ENCODE measurements at regions of chr5 and their contacts with region 1.

Region 1: GRCh38 chr5:55159763-55160492 is at the start of gene GPX8:
- DNase-seq: peak; percentile 17 to 52 (median 36)
- ATAC-seq: peak; percentile 91
- H3K4me3 ChIP-seq: no peak within 1 kb of the TSS
- H3K27ac ChIP-seq: no peak within 1 kb of the TSS
- H3K4me1 ChIP-seq: no peaks in the 10 kb centered on the region
- H3K27me3 ChIP-seq: peaks cover 4 to 10% of the 10 kb centered on the region in 2 experiments; a peak in 3 of 5 replicates
- CTCF ChIP-seq: peak; percentile 49 to 77 (median 61); a peak in 5 of 6 replicates
- EP300 ChIP-seq: no peak
- POLR2A ChIP-seq: no peak
- RAD21 ChIP-seq: peak; percentile 74 to 76
- polyA plus RNA-seq, gene GPX8: 0.90 to 0.92 TPM

Region 2: GRCh38 chr5:54905943-54906537 is 253.9 kb before region 1 on chr5:
- CTCF ChIA-PET with region 1: interaction called, 17 read pairs
- POLR2A ChIA-PET with region 1: no interaction called
- in situ Hi-C with region 1: loop called (anchors 10 kb)
- intact Hi-C with region 1: no loop called
- DNase-seq: peak; percentile 37 to 61 (median 46)
- ATAC-seq: peak; percentile 69
- H3K4me3 ChIP-seq: no peak overlapping the region
- H3K27ac ChIP-seq: no peak overlapping the region
- H3K4me1 ChIP-seq: no peaks in the 10 kb centered on the region
- H3K27me3 ChIP-seq: peaks cover 0 to 7% of the 10 kb centered on the region in 2 experiments; a peak in 2 of 5 replicates
- CTCF ChIP-seq: peak; percentile 60 to 82 (median 68); a peak in 5 of 6 replicates
- EP300 ChIP-seq: no peak
- POLR2A ChIP-seq: no peak
- RAD21 ChIP-seq: peak; percentile 79 to 80

Region 3: DNA sequence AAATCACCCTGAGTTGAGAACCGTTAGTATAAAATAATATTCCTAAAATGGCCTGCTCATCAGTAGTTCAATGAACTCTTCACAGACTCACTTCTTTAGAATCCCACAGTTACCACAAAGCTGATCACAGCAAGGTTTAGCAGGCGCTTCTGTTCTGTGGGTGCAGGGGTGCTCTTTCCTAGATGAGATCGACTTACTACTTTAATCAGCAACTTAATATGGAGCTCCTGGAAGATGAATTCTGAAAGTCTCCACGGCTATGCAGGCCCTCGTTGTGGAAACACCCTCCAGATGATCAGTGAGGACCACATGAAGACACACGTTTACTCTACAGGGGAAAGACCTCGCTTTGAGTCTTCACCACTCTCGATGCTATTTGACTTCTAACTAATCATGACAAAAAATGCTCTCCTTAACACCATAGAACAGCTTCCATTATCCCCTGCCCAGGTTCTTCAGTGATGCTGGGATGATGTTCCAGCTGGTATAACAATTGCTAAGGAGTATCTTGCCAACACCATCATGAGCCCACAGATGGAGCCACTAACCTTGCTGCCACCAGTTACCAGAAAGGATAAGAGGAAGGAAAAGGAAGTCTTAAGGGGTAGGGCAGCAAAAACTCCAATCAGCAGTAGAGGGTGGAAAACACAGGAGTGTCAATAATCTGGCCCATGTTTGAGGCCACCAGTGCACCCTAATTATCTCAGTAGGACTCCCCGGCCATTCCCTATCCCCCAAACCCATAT is 17.8 kb before region 1 on chr5:
- CTCF ChIA-PET with region 1: no interaction called
- POLR2A ChIA-PET with region 1: no interaction called
- in situ Hi-C with region 1: no loop called
- intact Hi-C with region 1: no loop called
- DNase-seq: no peak
- ATAC-seq: no peak
- H3K4me3 ChIP-seq: no peak overlapping the region
- H3K27ac ChIP-seq: no peak overlapping the region
- H3K4me1 ChIP-seq: no peaks in the 10 kb centered on the region
- H3K27me3 ChIP-seq: no peaks in the 10 kb centered on the region; a peak in 1 of 5 replicates
- CTCF ChIP-seq: no peak
- EP300 ChIP-seq: no peak
- POLR2A ChIP-seq: no peak
- RAD21 ChIP-seq: no peak

Measured in K562 (cell line).